Activated T-helper 2 cell treated with anti-CD3 and anti-CD28 coated beads, Interferon-gamma antibody, Interleukin-2, Interleukin-4, amounts not matched to agents 10 μg/mL and 5 μg/mL and 100 μg/mL, durations not matched to agents 14 hours and 24 hours and 36 hours (primary cell): ENCODE measurements at regions of chr15 and their contacts with region 1.

Region 1: DNA sequence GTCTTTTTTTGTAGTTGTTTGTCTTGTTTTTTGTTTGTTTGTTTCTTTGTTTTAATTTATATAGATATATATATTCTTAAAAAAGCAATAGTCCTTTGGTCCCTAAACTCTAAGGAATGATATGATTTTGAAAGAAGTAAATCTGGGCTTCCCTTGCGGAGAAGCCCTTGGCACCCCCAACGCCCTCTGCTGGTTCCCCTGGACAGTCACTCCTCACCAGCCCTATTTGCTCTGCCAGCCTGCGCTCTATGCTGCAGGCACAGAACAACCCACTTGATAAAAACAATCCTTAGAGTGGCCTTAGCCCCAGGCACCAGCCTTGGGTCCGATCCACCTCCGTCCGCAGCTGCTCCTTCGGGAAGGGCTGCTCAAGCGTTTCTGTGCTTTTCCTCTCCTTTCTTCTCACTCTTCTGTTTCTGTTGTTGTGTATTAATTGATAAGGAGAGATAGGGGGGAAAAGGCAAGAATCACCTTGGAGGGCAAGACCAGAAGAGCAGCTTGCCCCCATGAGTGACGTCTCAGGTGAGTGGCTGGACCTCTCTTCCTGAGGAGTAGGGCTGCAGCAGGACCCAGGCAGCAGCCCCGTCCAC is 13.7 kb upstream of the PARP6 start:
- DNase-seq: no peak
- H3K4me3 Mint-ChIP-seq: no peak overlapping the region
- H3K27ac Mint-ChIP-seq: no peak overlapping the region
- H3K4me1 Mint-ChIP-seq: no peaks in the 10 kb centered on the region
- H3K27me3 Mint-ChIP-seq: peaks cover 1% of the 10 kb centered on the region

Region 2: GRCh38 chr15:72199711-72200212 is 86.3 kb before region 1 on chr15:
- intact Hi-C with region 1: loop called (anchors 5 kb)
- DNase-seq: peak; percentile 58
- H3K4me3 Mint-ChIP-seq: no peak overlapping the region
- H3K27ac Mint-ChIP-seq: no peak overlapping the region
- H3K4me1 Mint-ChIP-seq: peaks cover 15% of the 10 kb centered on the region
- H3K27me3 Mint-ChIP-seq: peaks cover 6% of the 10 kb centered on the region

Region 3: GRCh38 chr15:72353265-72353664 is 67.2 kb after region 1 on chr15:
- intact Hi-C with region 1: no loop called
- DNase-seq: no peak
- H3K4me3 Mint-ChIP-seq: no peak overlapping the region
- H3K27ac Mint-ChIP-seq: no peak overlapping the region
- H3K4me1 Mint-ChIP-seq: peaks cover 4% of the 10 kb centered on the region
- H3K27me3 Mint-ChIP-seq: no peaks in the 10 kb centered on the region